GM18951 (cell line): ENCODE measurements at regions of chr1 and their contacts with region 1.

Region 1: GRCh38 chr1:159891275-159892157 is 8.4 kb downstream of the CFAP45 start:
- POLR2A ChIP-seq: no peak

Region 2: DNA sequence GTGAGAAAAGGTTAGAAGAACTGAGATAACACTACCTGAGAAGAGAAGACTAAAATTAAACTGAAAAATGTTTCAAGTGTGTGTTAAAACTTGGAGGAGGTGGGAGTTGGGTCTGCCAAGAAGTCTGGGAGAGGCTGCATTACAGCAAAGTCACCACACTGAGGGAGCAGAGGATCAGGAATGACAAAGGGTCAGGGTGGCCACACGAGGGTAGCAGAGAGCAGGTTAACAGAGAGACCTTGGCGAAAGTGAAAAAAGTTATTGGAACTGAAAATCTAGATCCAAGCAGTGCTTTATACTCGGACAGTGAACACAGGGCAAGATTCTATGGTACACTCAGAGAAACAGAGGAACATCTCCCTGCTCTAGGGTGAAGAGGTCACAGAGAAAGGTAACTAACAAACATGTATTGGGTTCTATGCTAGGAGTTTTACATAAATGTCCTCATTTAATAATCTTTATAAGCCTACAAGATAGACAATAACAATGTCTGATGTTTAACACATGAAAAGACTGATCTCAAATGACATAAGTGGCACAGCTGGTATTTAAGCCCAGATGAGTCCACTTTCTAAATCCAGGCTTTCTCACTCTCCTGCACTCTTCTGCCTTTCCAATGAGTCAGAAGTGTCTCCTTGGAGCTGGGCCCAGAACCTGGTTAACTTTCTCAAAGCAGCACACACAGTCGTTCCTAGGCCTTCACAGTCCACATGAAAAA is 730.4 kb before region 1 on chr1:
- in situ Hi-C with region 1: loop called (anchors 25 kb)
- POLR2A ChIP-seq: no peak

Region 3: DNA sequence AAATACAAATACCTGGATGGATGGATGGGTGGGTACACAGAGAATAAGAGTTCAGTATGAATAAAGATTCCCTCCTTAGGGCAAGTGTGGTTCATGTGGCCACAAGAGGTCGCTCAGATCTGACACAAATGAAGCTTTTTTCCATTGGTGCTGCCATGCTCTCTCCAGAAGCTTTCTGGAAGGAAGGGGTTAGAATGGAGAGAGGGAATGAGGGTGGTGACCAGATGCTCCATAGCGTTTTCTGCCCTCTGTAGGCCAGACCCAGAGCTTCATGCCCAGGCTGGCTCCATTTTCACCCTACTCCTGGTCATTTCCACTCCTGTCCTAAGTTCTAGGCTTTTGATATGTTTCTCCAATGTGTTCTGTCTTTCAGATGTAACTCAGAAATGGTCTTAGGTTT is 92.6 kb before region 1 on chr1:
- in situ Hi-C with region 1: loop called (anchors 5 kb)
- POLR2A ChIP-seq: no peak

Region 4: DNA sequence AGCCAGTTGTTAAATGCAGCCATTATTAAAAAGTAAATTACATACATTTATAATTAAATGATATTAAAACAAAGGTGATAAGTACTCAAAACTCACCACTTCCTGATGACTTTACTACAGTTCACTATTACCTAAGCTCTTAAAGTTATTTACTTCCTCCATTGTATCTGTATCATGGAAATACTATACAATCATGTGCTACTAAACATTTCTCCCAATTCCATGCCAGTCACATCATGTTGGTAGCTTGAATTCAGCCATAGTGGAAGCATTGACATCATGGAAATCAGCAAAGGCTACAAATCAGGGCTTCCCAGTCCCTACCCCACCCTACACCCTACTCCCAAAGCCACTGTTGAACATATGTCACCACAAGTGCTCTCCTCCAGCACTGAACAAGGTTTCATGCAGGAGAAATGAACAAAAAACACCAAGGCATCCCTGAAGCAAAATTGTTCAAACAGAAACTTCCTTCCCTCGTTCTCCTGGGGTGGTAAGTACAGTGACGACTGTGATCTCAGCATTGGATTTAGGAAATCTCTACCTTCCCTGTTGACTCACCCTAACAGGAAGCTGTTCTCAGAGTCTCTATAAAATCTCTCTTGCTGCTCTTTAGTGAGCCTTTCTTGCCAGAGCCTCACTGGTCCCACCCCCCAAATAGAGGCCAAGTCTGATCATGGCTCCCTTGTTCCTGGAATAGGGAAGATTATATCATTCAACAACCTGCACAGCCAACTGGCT is 41.7 kb before region 1 on chr1:
- in situ Hi-C with region 1: loop called (anchors 10 kb)
- POLR2A ChIP-seq: no peak

Region 5: DNA sequence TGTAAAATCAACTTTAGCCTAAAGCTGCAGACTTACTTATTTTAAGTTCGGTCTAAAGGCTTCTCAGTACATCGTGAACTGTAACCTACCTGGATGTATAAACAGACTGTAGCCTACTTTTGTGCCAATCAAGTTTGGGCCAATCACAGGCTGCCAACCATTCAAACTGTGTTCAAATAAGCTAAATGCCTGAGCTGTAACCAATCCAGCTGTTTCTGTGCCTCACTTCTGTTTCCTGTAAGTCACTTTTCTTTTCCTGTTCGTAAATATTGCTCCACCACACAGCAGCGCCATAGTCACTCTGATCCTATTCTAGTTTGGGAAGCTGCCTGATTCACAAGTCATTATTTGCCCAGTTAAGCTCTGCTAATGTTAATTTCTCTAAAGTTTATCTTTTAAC is 100.0 kb after region 1 on chr1:
- in situ Hi-C with region 1: no loop called
- POLR2A ChIP-seq: no peak